ENCODE measurements at regions of chr3 and their contacts with region 1.

Region 1: GRCh38 chr3:39126532-39127071 is 19.1 kb downstream of the TTC21A start:
- DNase-seq: peak in 2 of 5 donors; percentile 47 to 61
- H3K4me3 ChIP-seq: no peak overlapping the region
- H3K27ac ChIP-seq: no peak overlapping the region
- H3K4me1 ChIP-seq: no peaks in the 10 kb centered on the region
- H3K27me3 ChIP-seq: no peaks in the 10 kb centered on the region
- CTCF ChIP-seq: peak; percentile 15 to 61 (median 52)
- EP300 ChIP-seq: no peak
- POLR2A ChIP-seq: no peak

Region 2: DNA sequence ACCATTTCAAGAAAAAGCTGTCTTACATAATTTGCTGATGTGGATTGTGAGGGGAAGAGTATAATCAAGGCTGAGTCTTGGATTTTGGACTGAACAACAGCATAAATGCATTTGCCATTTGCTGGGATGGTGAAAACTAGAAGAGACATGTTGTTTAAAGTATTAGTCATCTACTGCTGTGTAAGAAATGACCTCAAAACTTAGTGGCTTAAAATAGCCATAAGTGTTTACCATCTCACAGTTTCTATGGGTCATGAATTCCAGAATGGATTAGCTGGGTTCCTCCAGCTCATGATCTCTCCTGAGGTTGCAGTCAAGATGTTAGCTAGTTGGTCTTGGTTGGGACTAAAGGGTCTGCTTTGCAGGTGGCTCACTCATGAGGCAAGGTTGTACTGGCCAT is 141.0 kb before region 1 on chr3:
- intact Hi-C with region 1: no loop called
- DNase-seq: no peak
- H3K4me3 ChIP-seq: no peak overlapping the region
- H3K27ac ChIP-seq: no peak overlapping the region
- H3K4me1 ChIP-seq: no peaks in the 10 kb centered on the region
- H3K27me3 ChIP-seq: no peaks in the 10 kb centered on the region
- CTCF ChIP-seq: no peak
- EP300 ChIP-seq: no peak
- POLR2A ChIP-seq: no peak

Region 3: DNA sequence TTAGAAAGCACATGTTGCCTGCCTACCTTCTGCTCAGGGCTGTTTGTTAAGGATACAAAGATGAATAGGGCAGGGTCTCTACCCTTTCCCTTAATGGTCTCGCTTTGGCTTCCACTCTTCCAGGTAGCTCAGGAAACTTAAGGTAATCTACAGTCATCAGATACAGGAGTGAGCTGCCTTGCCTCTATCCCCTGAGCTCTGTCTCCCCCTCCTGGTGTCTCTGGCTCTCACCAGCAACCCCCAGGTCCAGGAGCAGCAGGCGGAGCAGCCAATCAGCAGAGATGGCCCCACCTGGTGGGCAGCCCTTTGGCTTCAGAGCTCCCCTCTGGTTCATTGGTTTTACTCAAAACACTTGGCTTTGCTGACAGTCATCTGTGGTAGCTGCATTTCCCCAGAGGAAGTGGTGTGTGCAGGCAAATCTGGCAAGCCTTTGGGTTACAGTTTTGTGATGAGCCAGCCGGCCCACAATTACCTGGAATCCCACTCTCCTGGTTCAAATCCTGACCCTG is 161.8 kb after region 1 on chr3:
- intact Hi-C with region 1: loop called (anchors 2 to 5 kb)
- DNase-seq: peak; percentile 59 to 74 (median 74)
- H3K4me3 ChIP-seq: no peak overlapping the region
- H3K27ac ChIP-seq: no peak overlapping the region
- H3K4me1 ChIP-seq: no peaks in the 10 kb centered on the region
- H3K27me3 ChIP-seq: no peaks in the 10 kb centered on the region
- CTCF ChIP-seq: peak; percentile 38 to 79 (median 64)
- EP300 ChIP-seq: no peak
- POLR2A ChIP-seq: peak; percentile 15